Right cardiac atrium (tissue), 5 donors: ENCODE measurements at regions of chr4 and their contacts with region 1.

Region 1: GRCh38 chr4:107824353-107825071 is at the start of gene SGMS2:
- DNase-seq: peak; percentile 92
- ATAC-seq: peak; percentile 96 to 98
- H3K4me3 ChIP-seq: peak within 1 kb of the TSS; percentile 75
- H3K27ac ChIP-seq: peak within 1 kb of the TSS; percentile 91
- H3K4me1 ChIP-seq: no peaks in the 10 kb centered on the region
- H3K27me3 ChIP-seq: no peaks in the 10 kb centered on the region
- total RNA-seq, gene SGMS2: 20.5 to 35.5 (median 26.2) TPM

Region 2: DNA sequence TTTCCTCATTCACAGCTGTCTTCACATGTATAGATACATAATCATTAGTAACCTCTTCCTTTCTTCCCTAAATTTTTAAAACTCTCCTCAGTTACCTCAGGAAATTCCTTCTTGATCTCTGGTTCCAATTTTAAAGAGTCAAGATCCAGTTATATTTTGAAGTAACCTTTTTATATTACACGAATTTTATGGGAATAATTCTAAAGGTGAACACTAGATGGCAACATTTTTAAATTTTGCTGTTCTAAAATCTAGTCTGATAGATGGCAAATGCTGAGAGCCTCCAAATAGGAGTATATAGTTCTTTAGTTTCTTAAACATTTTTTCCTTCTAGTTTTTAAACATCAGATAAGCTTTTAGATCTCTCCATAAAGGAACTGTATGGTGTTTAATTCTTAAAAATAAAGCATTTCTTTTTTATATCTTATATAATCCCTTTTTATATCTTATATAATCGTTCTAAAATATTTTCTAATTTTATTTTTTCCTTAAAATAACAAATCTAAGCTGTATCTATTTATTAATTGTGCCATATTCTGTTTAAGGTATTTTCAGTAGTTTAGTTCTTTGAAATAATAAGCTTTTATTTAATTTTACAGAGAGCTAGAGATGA is 66.5 kb before region 1 on chr4:
- intact Hi-C with region 1: loop called in 1 of 4 experiments (anchors 5 kb)
- DNase-seq: no peak
- ATAC-seq: no peak
- H3K4me3 ChIP-seq: no peak overlapping the region
- H3K27ac ChIP-seq: no peak overlapping the region
- H3K4me1 ChIP-seq: no peaks in the 10 kb centered on the region
- H3K27me3 ChIP-seq: no peaks in the 10 kb centered on the region

Region 3: DNA sequence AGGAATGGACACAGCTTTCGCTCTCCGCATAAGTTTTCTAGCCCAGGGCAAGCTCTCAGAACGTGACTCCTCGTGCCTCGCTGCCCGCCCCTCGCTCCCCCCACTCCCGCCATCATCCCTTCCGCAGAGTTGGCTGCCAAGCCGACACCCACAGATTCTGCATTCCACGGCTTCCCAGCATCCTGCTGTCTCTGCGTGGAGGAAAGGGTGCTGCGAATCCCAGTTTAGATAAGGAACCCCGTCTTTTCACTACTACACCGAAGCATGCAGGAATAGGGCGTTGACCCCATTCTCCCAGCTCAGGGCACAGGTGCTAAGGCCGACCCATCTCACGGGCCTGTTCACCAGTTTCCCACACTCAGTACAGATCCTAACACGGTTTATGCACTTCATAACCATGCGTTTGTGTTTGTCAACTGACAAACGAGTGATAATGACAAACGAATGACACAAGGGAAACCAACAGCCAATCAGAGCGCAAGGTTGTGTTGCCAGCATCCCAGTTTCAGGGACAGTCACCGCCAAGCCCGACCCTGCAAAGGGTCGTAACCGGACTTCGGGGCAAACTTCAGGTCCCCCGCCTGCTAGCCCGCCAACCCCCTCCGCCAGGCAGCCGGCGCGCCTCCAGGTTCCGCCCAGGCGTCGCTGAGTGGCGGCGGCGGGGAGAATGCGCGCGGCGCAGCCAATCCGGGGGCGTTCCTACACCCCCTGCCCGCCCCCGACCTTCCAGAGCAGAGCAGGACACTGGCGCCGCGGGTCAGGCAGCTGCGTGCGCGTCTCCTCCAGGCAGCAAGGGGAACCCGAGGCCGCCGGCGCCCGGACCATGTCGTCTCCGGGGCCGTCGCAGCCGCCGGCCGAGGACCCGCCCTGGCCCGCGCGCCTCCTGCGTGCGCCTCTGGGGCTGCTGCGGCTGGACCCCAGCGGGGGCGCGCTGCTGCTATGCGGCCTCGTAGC is 106.6 kb after region 1 on chr4 and contains the start of gene CYP2U1:
- intact Hi-C with region 1: no loop called
- DNase-seq: peak; percentile 91 to 97 (median 97)
- ATAC-seq: peak; percentile 99
- H3K4me3 ChIP-seq: peak within 1 kb of the TSS; percentile 73
- H3K27ac ChIP-seq: peak within 1 kb of the TSS; percentile 59
- H3K4me1 ChIP-seq: peaks cover 3% of the 10 kb centered on the region
- H3K27me3 ChIP-seq: no peaks in the 10 kb centered on the region
- total RNA-seq, gene CYP2U1: 9.1 to 14.8 (median 13.7) TPM

Region 4: DNA sequence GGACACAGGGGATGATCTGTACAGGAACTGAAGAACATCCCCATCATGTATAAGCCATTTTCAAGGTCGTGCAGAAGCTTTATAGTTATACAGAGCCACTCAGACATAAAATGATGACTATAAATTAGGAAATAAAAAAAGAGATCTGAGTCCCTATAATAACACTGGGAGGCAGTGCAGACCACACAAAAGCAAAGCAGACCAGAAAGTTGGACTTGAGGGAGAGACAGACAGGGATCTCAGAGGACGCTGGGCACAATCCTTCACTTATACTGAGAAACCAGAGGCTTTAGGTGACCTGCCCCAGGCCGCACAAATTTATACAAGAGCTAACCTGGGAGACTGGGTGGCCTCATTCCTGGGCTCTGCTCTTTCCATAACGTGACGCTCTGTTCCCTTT is 235.7 kb after region 1 on chr4:
- intact Hi-C with region 1: no loop called
- DNase-seq: no peak
- ATAC-seq: peak; percentile 50 to 64
- H3K4me3 ChIP-seq: no peak overlapping the region
- H3K27ac ChIP-seq: no peak overlapping the region
- H3K4me1 ChIP-seq: no peaks in the 10 kb centered on the region
- H3K27me3 ChIP-seq: no peaks in the 10 kb centered on the region